ENCODE measurements at regions of chr11 and their contacts with region 1.

Region 1: DNA sequence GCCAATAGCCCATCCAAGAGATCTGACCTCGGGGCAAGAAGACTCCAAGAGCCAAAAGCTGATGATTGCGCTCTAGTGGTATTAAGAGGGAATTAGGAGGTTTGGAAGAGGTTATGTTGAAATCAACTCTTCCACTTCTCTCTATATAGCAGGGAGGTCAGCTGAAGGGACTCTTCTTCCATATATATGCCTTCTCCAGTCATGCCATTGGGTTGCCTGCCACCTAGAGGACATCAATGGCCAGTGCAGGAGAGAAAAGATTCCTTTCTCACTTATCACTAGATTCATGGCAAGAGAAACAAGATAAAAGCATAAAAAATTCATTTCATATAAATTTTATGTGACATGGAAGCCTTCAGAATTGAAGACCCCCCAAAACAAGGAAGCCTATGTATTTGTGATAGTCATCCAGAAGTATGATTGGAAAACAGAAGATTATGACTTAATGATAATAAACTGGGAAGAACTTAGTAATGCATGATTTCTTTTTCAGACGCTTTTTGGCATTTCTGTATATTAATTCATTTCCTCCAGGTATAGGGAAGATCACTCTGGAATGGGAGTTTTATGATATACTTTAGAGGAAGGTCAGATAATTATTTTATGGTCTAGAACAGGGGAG is 435.1 kb upstream of the DDI1 start:
- DNase-seq: peak in 4 of 14 experiments; percentile 2 to 30 (median 28)
- ATAC-seq: peak; percentile 49
- H3K4me3 ChIP-seq: no peak overlapping the region
- H3K4me3 Mint-ChIP-seq: no peak overlapping the region
- H3K27ac ChIP-seq: no peak overlapping the region
- H3K27ac Mint-ChIP-seq: no peak overlapping the region
- H3K4me1 ChIP-seq: no peaks in the 10 kb centered on the region
- H3K4me1 Mint-ChIP-seq: no peaks in the 10 kb centered on the region
- H3K27me3 ChIP-seq: no peaks in the 10 kb centered on the region
- H3K27me3 Mint-ChIP-seq: peaks cover 6% of the 10 kb centered on the region
- CTCF ChIP-seq: peak; percentile 42

Region 2: DNA sequence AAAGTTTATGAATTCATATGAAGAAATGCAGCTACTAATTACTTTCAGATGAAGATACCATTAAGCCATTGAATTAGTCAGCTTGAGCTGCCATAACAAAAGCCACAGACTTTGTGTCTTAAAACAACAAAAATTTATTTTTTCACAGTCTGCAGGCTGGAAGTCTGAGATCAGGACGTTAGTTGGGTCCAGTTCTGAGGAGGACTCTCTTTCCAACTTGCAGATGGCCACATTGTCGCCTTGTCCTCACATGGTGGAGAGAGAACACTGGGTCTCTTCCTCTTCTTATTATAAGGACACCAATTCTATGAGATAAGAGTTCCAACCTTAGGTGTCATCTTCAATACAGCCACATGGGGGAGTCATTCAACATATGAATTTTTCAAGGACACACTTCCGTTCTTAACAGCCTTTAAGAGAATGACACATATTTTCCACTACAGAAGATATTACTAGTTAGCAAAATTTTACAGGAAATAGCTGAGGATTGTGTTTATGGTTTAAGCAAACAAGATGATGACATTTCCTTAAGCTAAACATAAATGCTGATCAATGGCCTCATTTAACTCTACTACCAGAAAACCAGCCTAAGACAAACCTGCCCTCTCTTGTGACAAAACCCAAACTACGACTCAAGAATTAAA is 565.4 kb before region 1 on chr11:
- CTCF ChIA-PET with region 1: no interaction called
- POLR2A ChIA-PET with region 1: no interaction called
- intact Hi-C with region 1: loop called (anchors 5 to 10 kb)
- DNase-seq: peak in 8 of 14 experiments; percentile 0 to 87 (median 32)
- ATAC-seq: peak; percentile 96
- H3K4me3 ChIP-seq: no peak overlapping the region
- H3K4me3 Mint-ChIP-seq: no peak overlapping the region
- H3K27ac ChIP-seq: no peak overlapping the region
- H3K27ac Mint-ChIP-seq: peak overlapping the region; percentile 29
- H3K4me1 ChIP-seq: no peaks in the 10 kb centered on the region
- H3K4me1 Mint-ChIP-seq: peaks cover 6% of the 10 kb centered on the region
- H3K27me3 ChIP-seq: no peaks in the 10 kb centered on the region
- H3K27me3 Mint-ChIP-seq: no peaks in the 10 kb centered on the region
- CTCF ChIP-seq: peak; percentile 70

Region 3: DNA sequence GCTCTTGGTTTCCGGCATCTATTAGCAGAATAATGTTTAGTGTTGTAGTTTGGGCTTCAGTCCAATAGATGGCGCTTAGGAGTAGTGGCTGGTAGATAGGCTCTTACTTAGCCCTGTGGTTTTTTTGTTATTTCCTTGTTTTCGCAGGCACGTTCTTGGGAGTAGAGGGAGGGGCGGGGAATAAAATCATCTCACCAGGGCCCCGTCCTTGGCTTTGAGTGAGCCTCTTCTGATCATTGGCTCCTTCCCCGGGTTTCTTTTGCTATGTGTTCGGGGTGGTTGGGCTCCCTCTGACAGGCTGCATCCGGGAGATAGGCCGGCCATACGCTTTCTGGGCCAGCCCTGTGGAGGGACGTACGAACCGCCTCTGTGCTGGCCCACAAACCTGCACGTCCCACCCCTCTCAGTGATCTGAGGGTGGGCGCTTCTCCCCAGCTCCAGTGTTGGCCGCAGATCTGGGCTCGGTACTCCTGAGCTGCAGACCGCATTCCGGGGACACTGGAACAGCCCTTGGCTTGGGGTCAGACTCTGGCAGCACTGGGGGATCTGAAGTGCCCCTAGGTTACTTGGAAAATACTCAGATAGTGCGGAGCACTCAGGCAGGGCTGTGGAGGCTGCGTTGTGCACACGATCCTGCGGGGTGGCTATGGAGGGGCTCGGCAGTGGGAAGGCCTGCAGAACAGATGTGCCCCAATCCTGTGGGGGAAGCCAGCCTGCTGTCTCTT is 275.1 kb before region 1 on chr11:
- CTCF ChIA-PET with region 1: no interaction called
- POLR2A ChIA-PET with region 1: no interaction called
- intact Hi-C with region 1: loop called in 1 of 2 experiments (anchors 5 kb)
- DNase-seq: peak in 4 of 14 experiments; percentile 17 to 68 (median 65)
- ATAC-seq: peak; percentile 51
- H3K4me3 ChIP-seq: no peak overlapping the region
- H3K4me3 Mint-ChIP-seq: no peak overlapping the region
- H3K27ac ChIP-seq: no peak overlapping the region
- H3K27ac Mint-ChIP-seq: no peak overlapping the region
- H3K4me1 ChIP-seq: peaks cover 8% of the 10 kb centered on the region
- H3K4me1 Mint-ChIP-seq: peaks cover 5% of the 10 kb centered on the region
- H3K27me3 ChIP-seq: no peaks in the 10 kb centered on the region
- H3K27me3 Mint-ChIP-seq: no peaks in the 10 kb centered on the region
- CTCF ChIP-seq: peak; percentile 30